Spleen (tissue), 13 donors: ENCODE measurements at regions of chr12 and their contacts with region 1.

Region 1: GRCh38 chr12:56468216-56469006 is at the start of gene SPRYD4:
- DNase-seq: peak; percentile 98
- H3K4me3 ChIP-seq: peak within 1 kb of the TSS; percentile 64 to 97 (median 78)
- H3K27ac ChIP-seq: peak within 1 kb of the TSS; percentile 87 to 98 (median 93)
- H3K4me1 ChIP-seq: peaks cover 16 to 59% (median 41%) of the 10 kb centered on the region in 6 donors
- H3K27me3 ChIP-seq: no peaks in the 10 kb centered on the region
- CTCF ChIP-seq: peak in 9 of 11 experiments; percentile 18 to 71 (median 45)
- POLR2A ChIP-seq: peak; percentile 54 to 96 (median 69)
- total RNA-seq, gene SPRYD4: 2.8 to 4.9 (median 4.2) TPM

Region 2: GRCh38 chr12:56333679-56334489 is 134.5 kb before region 1 on chr12 and contains the start of gene PAN2:
- intact Hi-C with region 1: loop called (anchors 10 kb)
- DNase-seq: peak; percentile 95
- H3K4me3 ChIP-seq: peak within 1 kb of the TSS; percentile 49 to 75 (median 59)
- H3K27ac ChIP-seq: peak within 1 kb of the TSS; percentile 90 to 98 (median 96)
- H3K4me1 ChIP-seq: peaks cover 10 to 45% (median 32%) of the 10 kb centered on the region in 6 donors
- H3K27me3 ChIP-seq: no peaks in the 10 kb centered on the region
- CTCF ChIP-seq: peak in 10 of 11 experiments; percentile 29 to 67 (median 54)
- POLR2A ChIP-seq: peak; percentile 18 to 33 (median 33)
- total RNA-seq, gene PAN2: 47.4 to 132 (median 100) TPM